ENCODE measurements at regions of chr11 and their contacts with region 1.

Region 1: DNA sequence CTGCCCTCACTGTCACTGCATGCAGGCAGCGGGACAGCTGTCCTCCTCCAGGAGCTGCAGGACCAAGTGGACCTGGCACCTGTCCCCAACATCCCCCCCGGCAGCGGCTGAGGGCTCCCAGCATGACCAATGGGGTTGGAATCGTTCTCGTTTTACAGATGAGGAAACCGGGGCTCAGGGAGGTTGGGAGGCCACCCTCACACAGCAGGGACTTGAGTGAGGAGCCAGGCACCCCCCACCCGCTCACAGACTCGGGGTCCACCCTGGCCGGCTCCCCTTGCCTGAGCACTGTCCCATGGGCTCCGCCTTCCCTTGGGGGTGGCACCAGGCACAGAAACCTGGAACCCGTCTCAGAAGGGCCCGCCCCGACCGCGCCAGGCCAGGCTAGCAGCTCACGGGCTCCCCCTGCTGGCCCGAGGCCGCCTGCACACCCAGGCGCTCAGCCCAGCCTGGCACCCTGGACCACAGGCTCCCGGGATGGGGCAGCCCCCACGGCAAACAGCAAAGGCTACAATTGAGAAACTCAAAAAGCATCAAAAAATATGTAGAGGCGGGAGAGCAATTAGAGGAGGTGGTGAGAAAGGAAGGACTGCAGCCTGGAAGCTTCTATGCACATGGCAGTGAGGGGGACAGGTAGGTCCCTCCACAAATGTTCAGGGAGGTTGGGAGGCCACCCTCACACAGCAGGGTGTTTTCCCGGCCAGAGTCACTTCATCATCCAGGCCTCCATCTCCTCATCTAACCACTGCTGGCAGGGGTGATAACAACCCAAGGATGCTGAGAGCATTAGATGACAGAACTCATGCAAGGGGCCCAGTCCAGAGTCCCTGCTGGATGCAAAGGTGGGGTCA is 12.8 kb downstream of the MACROD1 start:
- DNase-seq: peak; percentile 33 to 88 (median 76)

Region 2: GRCh38 chr11:63768237-63769043 is 384.6 kb before region 1 on chr11 and contains the start of gene ZFTA:
- intact Hi-C with region 1: no loop called
- DNase-seq: peak in 36 of 42 donors; percentile 29 to 83 (median 62)

Region 3: DNA sequence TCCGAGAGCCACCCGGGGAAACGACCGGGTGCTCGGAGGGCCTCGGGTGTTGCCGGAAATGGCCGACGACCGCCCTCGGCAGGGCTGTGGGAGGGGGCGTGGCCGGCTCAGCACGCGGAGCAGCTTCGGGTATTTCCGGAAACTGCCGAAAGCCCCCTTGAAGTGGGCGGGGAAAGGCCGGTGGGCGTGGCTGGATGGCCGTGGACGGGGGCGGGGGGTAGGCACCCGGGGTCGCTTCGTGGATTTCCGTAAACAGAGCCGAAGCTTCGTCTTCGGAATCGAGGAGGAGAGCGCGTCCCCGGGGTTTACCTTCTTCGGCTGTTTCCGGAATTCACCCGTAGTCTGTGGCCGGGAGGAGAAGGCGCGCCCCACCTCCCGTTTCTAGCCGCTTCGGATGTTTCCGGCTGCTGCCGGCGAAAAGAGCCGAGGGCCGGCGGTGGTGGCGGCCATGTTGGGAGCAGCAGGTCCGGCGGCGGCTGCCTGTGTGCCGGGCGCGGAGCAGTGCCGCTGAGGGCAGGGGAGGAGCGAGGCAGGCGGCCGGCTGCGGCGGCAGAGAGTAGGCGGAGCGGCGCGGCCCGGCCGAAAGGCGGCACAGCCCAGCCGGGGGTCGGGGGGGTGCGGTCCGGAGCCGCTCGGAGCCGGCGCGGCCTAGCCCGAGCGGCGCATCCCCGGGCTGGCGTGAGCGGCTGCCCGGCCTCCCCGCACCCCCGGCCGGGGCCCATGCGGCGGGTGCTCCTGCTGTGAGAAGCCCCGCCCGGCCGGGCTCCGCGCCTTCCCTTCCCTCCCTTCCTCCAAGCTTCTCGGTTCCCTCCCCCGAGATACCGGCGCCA is 314.2 kb before region 1 on chr11 and contains the start of gene MARK2:
- intact Hi-C with region 1: loop called (anchors 10 kb)
- DNase-seq: peak; percentile 93 to 100 (median 99)

Region 4: DNA sequence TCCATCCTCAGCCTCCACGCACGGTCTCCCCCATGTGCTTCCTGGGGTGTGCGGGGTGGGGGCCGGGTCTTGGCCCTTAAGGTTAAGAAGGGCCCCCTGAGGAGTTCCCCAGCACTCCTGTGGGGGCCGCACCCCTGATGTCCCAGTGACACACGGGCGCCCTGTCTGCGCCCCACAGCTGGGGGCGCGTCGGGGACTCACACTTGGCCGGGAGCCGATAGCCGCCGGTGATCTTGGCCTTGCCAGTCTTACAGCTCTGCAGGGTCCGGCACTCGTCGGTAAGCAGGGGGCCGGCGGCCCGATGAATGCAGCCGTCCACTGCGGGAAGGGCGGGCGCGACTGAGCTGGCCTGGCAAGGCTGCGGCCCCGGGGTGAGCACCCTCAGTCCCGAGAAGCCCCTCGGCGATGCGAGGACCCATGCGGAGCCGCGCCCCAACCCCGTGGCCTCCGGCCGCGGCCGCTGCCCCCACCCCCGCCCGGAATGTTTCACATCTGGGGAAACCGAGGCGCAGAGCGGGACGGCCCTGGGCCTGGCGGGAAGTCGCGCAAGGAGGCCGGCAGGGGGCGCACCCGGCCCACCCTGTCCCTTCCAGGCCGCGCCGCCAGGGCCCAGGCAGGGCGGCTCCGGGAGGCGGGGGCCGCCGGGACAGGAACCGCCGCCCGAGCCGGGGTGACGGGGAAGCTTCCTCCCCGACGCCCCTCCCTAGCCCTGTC is 152.9 kb before region 1 on chr11:
- intact Hi-C with region 1: loop called (anchors 2 kb)
- DNase-seq: peak in 41 of 42 donors; percentile 40 to 90 (median 79)

Region 5: DNA sequence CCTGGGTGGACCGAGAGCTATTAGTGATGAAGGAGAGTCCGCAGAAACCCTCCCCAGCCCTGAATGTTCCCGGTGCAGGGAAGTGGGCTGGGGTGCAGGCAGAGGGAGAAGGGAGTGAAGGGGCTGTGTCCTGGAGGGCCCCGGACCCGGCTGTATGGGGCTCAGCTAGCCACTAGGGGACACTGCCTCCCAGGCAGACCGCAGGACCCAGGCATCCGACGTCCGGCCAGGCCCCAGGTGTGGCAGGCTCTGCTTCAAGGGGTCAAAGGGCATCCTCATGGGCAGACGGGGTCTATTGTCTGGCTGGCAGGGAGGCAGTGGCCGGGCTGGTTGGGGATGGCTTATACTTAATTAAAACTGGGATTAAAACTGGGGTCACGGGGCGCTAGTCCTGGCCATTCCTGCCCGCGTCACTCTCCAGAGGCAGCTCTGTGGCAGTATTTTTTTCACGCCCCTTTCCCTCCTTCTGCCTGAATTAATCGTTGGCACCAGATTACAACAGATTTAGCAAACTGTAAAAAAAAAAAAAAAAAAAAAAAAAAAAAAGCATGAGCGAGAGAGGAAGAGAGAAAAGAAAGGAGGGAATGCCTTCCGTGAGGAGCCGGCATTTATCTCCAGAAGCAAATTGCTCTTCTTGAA is 112.3 kb before region 1 on chr11:
- intact Hi-C with region 1: loop called (anchors 2 kb)
- DNase-seq: peak; percentile 52 to 92 (median 77)

Region 6: DNA sequence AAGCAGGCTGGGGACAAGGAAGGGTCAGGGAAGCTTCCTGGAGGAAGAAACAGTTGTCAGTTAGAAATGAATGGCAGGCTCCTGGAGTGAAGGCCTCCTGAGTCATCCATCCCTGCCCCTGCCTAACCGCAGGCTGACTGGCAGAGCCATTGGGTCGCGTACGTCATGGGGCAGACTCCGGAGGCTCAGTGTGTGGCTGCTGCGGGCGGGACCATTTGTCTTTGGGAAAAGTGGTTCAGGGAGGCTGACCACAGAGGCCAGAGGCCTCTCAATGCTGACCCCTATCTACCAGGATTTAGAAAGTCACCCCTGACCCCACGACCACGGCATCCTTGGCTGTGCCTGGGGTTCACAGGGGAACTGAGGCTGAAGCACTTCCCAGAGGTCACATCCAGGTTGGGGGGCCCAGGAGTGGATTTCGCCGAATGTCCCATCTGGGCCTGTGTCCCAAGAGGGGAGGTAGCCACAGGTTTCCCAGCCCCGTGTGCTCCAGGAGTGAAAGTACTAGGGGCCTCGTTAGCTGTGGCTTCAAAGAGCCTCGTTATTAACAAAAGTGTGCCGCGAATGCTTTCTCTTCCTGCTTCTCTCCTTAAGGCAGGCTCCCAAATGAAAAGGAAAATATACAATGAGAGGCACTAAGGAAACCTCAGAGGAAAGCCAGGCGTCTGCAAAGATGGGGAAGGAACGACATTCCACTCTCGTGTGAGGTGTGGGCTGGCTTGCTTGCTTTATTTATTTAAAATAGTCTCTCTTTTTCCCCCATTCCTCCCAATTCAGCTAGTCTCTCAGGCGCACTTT is 58.4 kb before region 1 on chr11:
- intact Hi-C with region 1: loop called (anchors 10 kb)
- DNase-seq: peak in 23 of 42 donors; percentile 43 to 84 (median 66)

Region 7: DNA sequence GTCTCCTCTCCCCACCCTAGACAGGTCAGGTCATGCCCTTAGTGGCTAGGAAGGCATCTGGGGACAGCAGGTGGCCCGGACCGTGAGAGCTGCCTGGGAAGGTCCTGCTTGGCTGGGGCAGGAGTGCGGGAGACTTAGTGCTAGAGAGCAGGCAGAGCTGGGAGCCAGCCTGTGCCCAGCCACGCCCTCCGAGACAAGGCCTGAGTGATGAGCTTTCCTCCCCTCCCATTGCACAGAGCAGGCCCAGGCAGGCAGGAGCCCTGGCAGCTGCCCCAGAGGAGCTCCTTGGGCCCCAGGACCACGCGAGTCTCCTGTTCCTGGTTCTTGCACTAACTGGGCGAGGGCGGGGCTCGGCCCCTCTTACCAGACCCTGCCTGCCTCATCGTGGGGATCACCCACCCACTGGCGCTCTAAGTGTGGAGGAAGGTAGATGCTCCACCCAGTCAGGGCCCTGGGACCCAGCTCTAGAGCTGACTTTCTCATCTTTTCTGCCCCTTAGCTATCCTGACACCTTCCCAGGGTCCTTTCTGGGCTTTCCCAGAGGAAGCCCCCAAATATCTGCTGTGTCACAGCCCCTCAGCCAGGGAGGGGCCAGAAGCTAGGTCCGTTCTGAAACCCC is 32.0 kb before region 1 on chr11:
- intact Hi-C with region 1: no loop called
- DNase-seq: peak in 4 of 42 donors; percentile 26 to 54 (median 50)

Region 8: GRCh38 chr11:64472593-64473455 is 319.8 kb after region 1 on chr11:
- intact Hi-C with region 1: no loop called
- DNase-seq: no peak

Measured in head of caudate nucleus (tissue), 42 donors.